Endothelial cell of umbilical vein (primary cell): ENCODE measurements at regions of chr9 and their contacts with region 1.

Region 1: GRCh38 chr9:32579706-32580331 is 6.9 kb upstream of the NDUFB6 start:
- DNase-seq: peak; percentile 67
- H3K4me3 ChIP-seq: no peak overlapping the region
- H3K27ac ChIP-seq: no peak overlapping the region
- H3K4me1 ChIP-seq: peaks cover 9% of the 10 kb centered on the region
- H3K27me3 ChIP-seq: peaks cover 8 to 10% of the 10 kb centered on the region in 2 experiments
- CTCF ChIP-seq: peak; percentile 85 to 89
- POLR2A ChIP-seq: no peak

Region 2: DNA sequence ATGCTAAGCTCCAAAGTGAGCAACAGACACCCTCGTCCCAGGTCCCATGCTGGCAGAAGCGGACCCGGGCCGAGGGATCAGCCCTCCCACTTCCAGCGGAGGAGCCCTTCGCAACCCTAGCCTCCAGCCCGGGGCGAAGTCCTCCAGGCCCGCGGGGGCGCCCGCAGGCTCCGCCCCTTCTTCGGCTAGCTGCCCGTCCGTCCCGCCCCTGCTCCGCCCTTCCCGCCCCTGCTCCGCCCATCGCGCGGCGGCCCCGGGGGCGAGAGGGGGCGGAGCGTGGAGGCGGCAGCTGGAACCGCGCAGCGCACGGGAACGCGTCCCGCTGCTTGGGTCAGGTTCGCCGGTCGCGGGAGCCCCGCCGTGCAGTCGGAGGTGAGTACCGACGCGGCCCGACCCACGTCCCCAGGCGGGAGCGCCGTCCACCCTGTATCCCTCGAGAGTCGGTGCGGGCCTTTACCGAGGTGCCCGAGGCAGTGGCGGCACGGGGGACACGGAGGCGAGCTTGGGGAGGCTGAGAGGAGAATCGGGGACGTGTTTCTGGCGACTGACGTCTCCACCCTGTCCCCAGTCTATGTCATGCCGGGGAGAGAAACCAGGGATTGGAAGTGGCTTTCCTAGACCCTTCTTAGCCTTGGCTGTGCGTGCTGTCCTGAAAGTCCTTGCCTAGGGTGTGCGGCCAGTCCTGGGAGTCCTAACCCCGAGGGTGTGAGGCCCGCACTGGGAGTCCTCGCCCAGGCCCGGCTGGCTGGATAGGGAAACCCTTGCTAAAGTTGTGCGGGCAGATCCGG is 195.3 kb before region 1 on chr9 and contains the start of gene ACO1:
- CTCF ChIA-PET with region 1: interaction called, 1,384 read pairs
- POLR2A ChIA-PET with region 1: no interaction called
- dilution Hi-C with region 1: no loop called
- intact Hi-C with region 1: loop called (anchors 1 kb)
- DNase-seq: peak; percentile 91
- H3K4me3 ChIP-seq: peak within 1 kb of the TSS; percentile 50 to 91 (median 78)
- H3K27ac ChIP-seq: peak within 1 kb of the TSS; percentile 51
- H3K4me1 ChIP-seq: peaks cover 28% of the 10 kb centered on the region
- H3K27me3 ChIP-seq: no peaks in the 10 kb centered on the region
- CTCF ChIP-seq: no peak
- POLR2A ChIP-seq: peak; percentile 74
- total RNA-seq, gene ACO1: 54.1 and 56.9 TPM in 2 replicates

Region 3: GRCh38 chr9:32566770-32567169 is 13.0 kb before region 1 on chr9:
- CTCF ChIA-PET with region 1: interaction called, 15 read pairs
- POLR2A ChIA-PET with region 1: no interaction called
- dilution Hi-C with region 1: no loop called
- intact Hi-C with region 1: no loop called
- DNase-seq: no peak
- H3K4me3 ChIP-seq: no peak overlapping the region
- H3K27ac ChIP-seq: no peak overlapping the region
- H3K4me1 ChIP-seq: peaks cover 9% of the 10 kb centered on the region
- H3K27me3 ChIP-seq: no peaks in the 10 kb centered on the region
- CTCF ChIP-seq: no peak
- POLR2A ChIP-seq: no peak

Region 4: DNA sequence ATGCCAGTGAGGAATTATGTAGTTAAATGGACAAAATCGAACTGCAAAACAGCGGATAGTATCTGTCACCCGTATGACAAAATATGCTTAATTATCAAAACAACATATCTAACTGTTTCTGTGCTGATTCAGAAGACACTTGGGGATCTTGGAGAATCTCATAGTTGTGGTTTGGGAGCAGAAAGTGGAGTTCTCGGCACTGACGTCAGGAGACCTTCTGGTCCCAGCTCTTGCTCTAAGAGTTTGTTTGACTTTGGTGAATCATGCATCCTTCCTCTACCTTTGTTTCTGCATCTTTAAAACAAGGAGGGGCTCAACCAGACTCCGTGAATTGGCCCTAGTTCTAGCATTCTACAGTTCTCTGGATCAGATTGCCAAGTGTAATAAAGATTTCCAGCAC is 92.6 kb after region 1 on chr9:
- CTCF ChIA-PET with region 1: no interaction called
- POLR2A ChIA-PET with region 1: no interaction called
- dilution Hi-C with region 1: no loop called
- intact Hi-C with region 1: no loop called
- DNase-seq: peak; percentile 29
- H3K4me3 ChIP-seq: no peak overlapping the region
- H3K27ac ChIP-seq: no peak overlapping the region
- H3K4me1 ChIP-seq: no peaks in the 10 kb centered on the region
- H3K27me3 ChIP-seq: no peaks in the 10 kb centered on the region
- CTCF ChIP-seq: no peak
- POLR2A ChIP-seq: no peak

Region 5: DNA sequence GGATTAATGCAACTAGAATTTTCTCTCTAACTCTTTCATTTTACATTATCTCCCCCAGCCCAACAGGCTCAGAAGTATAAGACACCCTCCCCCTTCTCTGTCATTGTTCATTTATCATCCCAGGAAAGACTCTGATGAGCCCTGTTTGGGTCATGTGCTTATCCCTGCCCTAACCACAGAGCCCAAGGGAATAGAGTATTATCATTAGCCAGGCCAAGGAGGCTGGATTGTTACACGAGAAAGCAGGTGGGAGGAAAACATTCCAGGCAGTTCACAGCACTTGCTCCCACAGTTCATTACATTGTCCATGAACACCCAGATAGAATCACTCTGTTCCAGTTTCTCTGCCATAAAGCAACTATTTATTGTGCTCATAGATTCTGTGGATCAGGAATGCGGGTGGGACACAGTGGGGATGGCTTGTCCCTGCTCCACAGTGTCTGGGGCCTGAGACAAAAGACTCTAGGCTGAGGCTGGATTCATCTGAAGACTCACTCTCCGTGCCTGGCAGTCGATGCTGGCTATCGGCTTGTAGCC is 144.0 kb after region 1 on chr9:
- CTCF ChIA-PET with region 1: no interaction called
- POLR2A ChIA-PET with region 1: no interaction called
- dilution Hi-C with region 1: no loop called
- intact Hi-C with region 1: no loop called
- DNase-seq: no peak
- H3K4me3 ChIP-seq: no peak overlapping the region
- H3K27ac ChIP-seq: no peak overlapping the region
- H3K4me1 ChIP-seq: no peaks in the 10 kb centered on the region
- H3K27me3 ChIP-seq: no peaks in the 10 kb centered on the region
- CTCF ChIP-seq: no peak
- POLR2A ChIP-seq: no peak

Region 6: DNA sequence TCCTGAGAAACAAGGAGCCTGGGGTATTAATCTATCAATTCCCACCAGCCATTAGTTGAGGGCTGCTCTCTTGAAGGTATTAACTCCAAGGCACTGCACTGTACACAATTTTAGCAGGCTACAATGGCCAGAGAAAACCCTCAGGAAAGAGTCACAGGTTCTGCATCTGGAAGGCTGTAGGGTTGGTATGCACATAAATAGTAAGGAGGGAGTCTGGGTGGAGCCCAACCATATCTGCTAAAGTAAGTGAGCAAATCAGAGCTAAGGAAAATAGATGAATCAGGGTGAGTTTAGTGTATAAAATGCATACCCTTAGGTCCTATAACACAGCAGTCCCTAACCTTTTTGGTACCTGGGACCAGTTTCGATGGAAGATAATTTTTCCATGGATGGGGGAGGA is 221.7 kb after region 1 on chr9:
- CTCF ChIA-PET with region 1: no interaction called
- POLR2A ChIA-PET with region 1: no interaction called
- dilution Hi-C with region 1: no loop called
- intact Hi-C with region 1: loop called (anchors 10 kb)
- DNase-seq: no peak
- H3K4me3 ChIP-seq: no peak overlapping the region
- H3K27ac ChIP-seq: no peak overlapping the region
- H3K4me1 ChIP-seq: no peaks in the 10 kb centered on the region
- H3K27me3 ChIP-seq: no peaks in the 10 kb centered on the region
- CTCF ChIP-seq: no peak
- POLR2A ChIP-seq: no peak

Region 7: GRCh38 chr9:33225319-33226149 is 645.7 kb after region 1 on chr9:
- CTCF ChIA-PET with region 1: interaction called, 5 read pairs
- POLR2A ChIA-PET with region 1: no interaction called
- dilution Hi-C with region 1: no loop called
- intact Hi-C with region 1: loop called (anchors 5 kb)
- DNase-seq: peak; percentile 91
- H3K4me3 ChIP-seq: no peak overlapping the region
- H3K27ac ChIP-seq: no peak overlapping the region
- H3K4me1 ChIP-seq: peaks cover 9% of the 10 kb centered on the region
- H3K27me3 ChIP-seq: no peaks in the 10 kb centered on the region
- CTCF ChIP-seq: peak; percentile 41 to 55
- POLR2A ChIP-seq: no peak